Mammary epithelial cell (primary cell): ENCODE measurements at regions of chr18 and their contacts with region 1.

Region 1: DNA sequence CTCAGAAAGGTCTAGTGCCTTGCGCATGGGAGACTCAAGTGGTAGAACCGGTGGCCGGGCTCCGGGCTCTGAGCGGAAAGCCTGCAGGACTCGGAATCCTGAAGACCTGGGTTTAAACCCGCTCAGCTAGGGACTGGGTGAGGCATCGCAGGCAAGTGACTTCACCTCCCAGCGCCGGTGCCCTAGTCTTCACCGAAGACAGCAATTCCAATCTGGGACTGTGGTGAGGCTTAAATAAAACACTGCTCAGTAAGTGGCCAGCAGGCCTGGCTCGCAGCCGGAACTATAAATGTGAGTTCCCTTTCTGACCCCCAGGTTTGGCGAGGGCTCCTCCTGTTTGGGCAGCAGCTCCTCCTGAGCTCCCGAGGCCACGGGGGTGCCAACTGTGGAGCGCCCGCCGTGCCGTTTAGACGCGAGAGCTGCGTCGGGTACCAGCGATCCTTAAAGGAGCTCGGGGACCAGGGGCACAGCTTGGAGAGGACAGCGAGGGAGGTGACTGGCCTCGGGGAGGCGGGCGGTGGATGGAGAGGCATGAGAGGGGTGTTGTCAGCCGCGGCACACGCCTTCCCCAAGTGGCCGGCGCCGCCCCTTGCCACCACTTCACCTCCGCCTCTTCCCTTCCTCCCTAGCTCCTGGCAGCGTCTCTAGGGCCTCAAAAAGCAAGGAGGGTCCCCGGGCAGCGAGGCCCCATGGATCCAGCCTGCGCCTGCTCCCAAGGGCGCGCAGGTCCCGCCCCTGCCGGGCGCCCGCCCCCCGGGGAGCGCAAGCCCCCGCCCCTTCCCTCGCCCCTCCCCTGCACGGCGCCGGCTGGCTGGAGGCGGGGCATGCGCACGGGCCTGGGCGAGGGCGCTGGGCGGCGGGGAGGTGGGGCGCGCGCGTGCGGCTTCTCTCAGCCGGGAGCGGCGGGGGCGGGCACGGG is 736 bp upstream of the MTCL1 start:
- DNase-seq: peak; percentile 85
- H3K4me3 ChIP-seq: peak overlapping the region; percentile 47 to 80 (median 65)
- H3K27ac ChIP-seq: peak overlapping the region; percentile 47
- H3K4me1 ChIP-seq: peaks cover 15% of the 10 kb centered on the region
- H3K27me3 ChIP-seq: no peaks in the 10 kb centered on the region
- CTCF ChIP-seq: no peak

Region 2: GRCh38 chr18:8786478-8787370 is 82.1 kb after region 1 on chr18:
- CTCF ChIA-PET with region 1: no interaction called
- dilution Hi-C with region 1: no loop called
- in situ Hi-C with region 1: no loop called
- intact Hi-C with region 1: loop called (anchors 5 kb)
- DNase-seq: peak; percentile 91
- H3K4me3 ChIP-seq: no peak overlapping the region
- H3K27ac ChIP-seq: peak overlapping the region; percentile 75
- H3K4me1 ChIP-seq: peaks cover 21% of the 10 kb centered on the region
- H3K27me3 ChIP-seq: no peaks in the 10 kb centered on the region
- CTCF ChIP-seq: no peak

Region 3: GRCh38 chr18:8800449-8800848 is 95.8 kb after region 1 on chr18:
- CTCF ChIA-PET with region 1: interaction called, 20 read pairs
- dilution Hi-C with region 1: no loop called
- in situ Hi-C with region 1: no loop called
- intact Hi-C with region 1: no loop called
- DNase-seq: peak; percentile 78
- H3K4me3 ChIP-seq: no peak overlapping the region
- H3K27ac ChIP-seq: peak overlapping the region; percentile 51
- H3K4me1 ChIP-seq: peaks cover 39% of the 10 kb centered on the region
- H3K27me3 ChIP-seq: no peaks in the 10 kb centered on the region
- CTCF ChIP-seq: no peak